Activated CD4-positive, alpha-beta T cell treated with anti-CD3 and anti-CD28 coated beads for 36 hours (primary cell): ENCODE measurements at regions of chr5 and their contacts with region 1.

Region 1: GRCh38 chr5:180810210-180810958 is 7.8 kb upstream of the MGAT1 start:
- DNase-seq: peak; percentile 98
- ATAC-seq: peak; percentile 79
- H3K4me3 Mint-ChIP-seq: peak overlapping the region; percentile 91
- H3K27ac Mint-ChIP-seq: peak overlapping the region; percentile 97
- H3K4me1 Mint-ChIP-seq: peaks cover 72% of the 10 kb centered on the region
- H3K27me3 Mint-ChIP-seq: no peaks in the 10 kb centered on the region

Region 2: DNA sequence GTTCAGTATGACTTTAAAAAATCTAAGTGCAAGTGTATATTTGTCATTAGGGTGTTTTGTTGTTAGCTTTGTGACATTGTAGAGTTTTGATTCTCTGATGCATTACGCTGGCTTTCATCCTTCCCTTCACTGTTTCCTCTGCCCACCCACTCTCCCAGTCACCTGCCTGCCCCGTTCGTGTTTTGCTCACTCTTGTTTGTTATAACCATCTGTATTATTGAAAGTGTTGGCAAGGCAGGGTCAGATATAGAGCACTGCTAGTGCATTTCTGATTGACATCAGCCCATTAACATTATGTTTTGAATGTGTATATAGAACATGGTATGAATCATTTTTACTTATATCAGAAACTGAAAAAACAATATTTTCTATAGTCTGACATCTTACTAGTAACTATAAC is 246.4 kb before region 1 on chr5:
- CTCF ChIA-PET with region 1: no interaction called
- POLR2A ChIA-PET with region 1: no interaction called
- intact Hi-C with region 1: no loop called
- DNase-seq: peak; percentile 49
- ATAC-seq: peak; percentile 50
- H3K4me3 Mint-ChIP-seq: no peak overlapping the region
- H3K27ac Mint-ChIP-seq: no peak overlapping the region
- H3K4me1 Mint-ChIP-seq: peaks cover 35% of the 10 kb centered on the region
- H3K27me3 Mint-ChIP-seq: no peaks in the 10 kb centered on the region

Region 3: DNA sequence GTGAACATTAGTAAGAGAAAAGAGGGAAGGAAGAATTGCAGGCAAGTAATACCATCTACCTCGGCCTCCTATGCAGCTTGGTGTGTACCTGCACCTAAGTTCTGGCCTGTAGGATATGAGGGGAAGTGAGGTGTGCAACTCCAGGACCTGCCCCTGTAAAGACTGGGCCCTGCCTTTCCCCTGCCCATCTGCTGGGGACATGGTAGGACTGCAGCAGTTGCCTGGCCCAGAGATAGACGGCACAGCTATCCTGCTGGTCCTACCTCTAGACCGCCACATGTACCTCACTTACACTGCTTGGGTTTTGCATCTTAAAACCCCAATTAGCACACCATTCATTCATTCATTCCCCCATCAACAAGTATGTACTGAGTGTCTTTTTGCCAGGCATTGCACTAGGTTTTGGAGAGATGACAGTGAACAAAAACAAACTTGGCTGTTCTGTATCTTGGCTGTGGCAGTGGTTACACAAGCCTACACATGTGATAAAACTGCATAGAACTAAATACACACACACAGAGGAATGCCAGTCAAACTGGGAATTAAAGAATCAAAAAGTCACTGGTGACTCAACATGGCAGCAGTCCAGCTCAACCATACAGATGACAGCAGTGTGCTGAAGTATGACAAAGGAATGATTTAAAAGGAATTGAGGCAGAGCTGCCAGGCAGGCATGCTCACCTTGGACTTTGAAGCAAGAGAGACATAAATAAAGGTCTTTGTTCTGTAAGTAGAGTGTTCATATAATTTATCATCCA is 15.6 kb after region 1 on chr5:
- CTCF ChIA-PET with region 1: interaction called, 9 read pairs
- POLR2A ChIA-PET with region 1: interaction called, 9 read pairs
- intact Hi-C with region 1: loop called in 1 of 2 experiments (anchors 1 kb)
- DNase-seq: peak; percentile 82
- ATAC-seq: peak; percentile 77
- H3K4me3 Mint-ChIP-seq: no peak overlapping the region
- H3K27ac Mint-ChIP-seq: peak overlapping the region; percentile 51
- H3K4me1 Mint-ChIP-seq: peaks cover 56% of the 10 kb centered on the region
- H3K27me3 Mint-ChIP-seq: no peaks in the 10 kb centered on the region

Region 4: DNA sequence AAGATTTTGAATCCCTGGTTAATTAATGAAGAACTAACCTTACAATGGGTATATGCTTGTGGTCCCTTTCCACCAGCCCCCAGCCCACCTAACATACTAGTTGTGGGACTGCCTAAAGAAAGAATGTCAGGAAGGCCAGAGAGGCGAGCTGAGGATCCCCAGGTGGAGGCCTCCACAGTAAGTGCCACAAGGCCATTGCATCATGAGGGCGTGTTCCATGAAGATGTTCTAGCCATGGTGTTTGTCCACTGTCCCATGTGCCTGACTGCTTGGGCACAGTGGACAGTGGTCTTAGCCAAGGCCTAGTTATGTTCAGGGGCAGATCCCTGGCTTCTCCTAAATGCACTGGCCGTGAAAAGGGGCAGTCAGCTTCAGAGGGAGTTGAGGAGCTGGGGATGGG is 29.5 kb after region 1 on chr5:
- CTCF ChIA-PET with region 1: no interaction called
- POLR2A ChIA-PET with region 1: no interaction called
- intact Hi-C with region 1: no loop called
- DNase-seq: no peak
- ATAC-seq: no peak
- H3K4me3 Mint-ChIP-seq: no peak overlapping the region
- H3K27ac Mint-ChIP-seq: no peak overlapping the region
- H3K4me1 Mint-ChIP-seq: peaks cover 1% of the 10 kb centered on the region
- H3K27me3 Mint-ChIP-seq: no peaks in the 10 kb centered on the region

Region 5: DNA sequence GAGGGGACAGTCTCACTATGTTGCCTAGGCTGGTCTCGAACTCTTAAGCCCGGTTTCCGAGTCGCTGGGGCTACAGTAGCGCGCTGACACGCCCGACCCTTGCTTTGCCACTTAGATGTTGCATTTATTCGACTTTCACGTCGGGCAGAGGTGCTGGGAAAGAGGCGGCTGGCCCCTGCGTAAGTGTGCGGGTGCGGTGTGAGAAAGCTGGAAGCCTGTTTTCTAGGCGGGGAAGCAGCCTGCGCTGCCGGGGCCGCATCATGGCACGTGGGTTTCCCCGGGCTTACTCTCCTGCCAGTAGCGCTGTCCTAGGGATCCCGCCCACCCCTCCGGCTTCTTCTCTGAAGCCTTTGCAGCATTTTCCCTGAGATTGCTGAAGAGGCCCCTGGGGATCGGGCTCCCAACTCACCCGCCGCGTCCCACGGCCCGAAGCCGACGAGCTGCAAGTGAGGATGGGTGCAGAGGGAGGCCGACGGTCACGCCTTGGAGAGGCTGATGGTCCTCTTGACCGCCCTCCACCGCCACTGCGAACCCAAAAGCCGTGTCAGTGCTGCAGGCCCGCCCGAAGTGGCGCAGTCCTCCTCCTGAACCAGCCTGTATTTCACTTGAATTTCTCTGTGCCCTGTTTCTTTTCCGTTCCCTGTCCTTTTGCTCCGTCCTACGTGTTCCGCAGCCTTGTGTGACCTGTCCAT is 406.9 kb after region 1 on chr5:
- CTCF ChIA-PET with region 1: interaction called, 3 read pairs
- POLR2A ChIA-PET with region 1: no interaction called
- intact Hi-C with region 1: loop called in 1 of 2 experiments (anchors 1 kb)
- DNase-seq: peak; percentile 80
- ATAC-seq: peak; percentile 10
- H3K4me3 Mint-ChIP-seq: peak overlapping the region; percentile 77
- H3K27ac Mint-ChIP-seq: peak overlapping the region; percentile 85
- H3K4me1 Mint-ChIP-seq: peaks cover 45% of the 10 kb centered on the region
- H3K27me3 Mint-ChIP-seq: no peaks in the 10 kb centered on the region

Region 6: DNA sequence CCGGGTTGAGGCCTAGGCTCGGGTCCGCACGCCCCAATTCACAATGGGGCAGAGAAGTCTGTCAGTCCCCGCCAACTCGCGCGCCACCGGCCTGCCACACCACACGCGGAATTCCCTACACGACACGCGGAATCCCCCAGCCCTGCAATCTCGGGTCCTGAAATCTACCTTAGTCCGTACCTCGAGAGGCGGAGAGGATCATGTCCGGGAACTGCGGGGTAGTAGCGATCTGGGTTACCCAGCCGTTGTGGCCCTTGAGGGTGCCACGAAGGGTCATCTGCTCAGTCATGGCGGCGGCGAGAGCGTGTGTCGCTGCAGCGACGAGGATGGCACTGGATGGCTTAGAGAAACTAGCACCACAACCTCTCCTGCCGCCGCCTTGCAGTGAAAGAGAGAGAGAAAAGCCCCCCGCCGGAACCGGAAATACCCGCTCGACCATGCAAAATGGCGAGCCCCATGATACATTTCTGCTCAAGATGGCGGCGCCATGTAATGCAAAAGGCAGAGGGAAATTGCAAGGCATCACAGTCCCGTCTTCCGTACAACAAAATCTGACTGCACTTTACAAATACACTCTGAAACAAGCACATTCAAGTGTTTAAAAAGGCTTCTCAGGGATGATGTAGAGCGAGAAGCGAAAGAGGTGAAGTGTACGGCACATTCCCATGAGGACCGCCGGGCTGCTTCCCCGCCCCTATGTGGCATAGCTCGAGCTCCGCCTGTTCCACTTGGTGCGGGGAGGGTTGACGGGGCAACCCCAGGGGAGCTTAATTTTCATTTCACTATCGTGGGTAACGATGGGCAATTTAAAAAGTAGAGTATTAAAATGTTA is 433.3 kb after region 1 on chr5 and contains the start of gene RACK1:
- CTCF ChIA-PET with region 1: interaction called, 3 read pairs
- POLR2A ChIA-PET with region 1: no interaction called
- intact Hi-C with region 1: loop called in 1 of 2 experiments (anchors 1 kb)
- DNase-seq: peak; percentile 94
- ATAC-seq: peak; percentile 70
- H3K4me3 Mint-ChIP-seq: peak within 1 kb of the TSS; percentile 91
- H3K27ac Mint-ChIP-seq: peak within 1 kb of the TSS; percentile 99
- H3K4me1 Mint-ChIP-seq: peaks cover 50% of the 10 kb centered on the region
- H3K27me3 Mint-ChIP-seq: no peaks in the 10 kb centered on the region
- total RNA-seq, gene RACK1: 2,724 to 3,901 TPM